ENCODE measurements at regions of chr17 and their contacts with region 1.

Region 1: DNA sequence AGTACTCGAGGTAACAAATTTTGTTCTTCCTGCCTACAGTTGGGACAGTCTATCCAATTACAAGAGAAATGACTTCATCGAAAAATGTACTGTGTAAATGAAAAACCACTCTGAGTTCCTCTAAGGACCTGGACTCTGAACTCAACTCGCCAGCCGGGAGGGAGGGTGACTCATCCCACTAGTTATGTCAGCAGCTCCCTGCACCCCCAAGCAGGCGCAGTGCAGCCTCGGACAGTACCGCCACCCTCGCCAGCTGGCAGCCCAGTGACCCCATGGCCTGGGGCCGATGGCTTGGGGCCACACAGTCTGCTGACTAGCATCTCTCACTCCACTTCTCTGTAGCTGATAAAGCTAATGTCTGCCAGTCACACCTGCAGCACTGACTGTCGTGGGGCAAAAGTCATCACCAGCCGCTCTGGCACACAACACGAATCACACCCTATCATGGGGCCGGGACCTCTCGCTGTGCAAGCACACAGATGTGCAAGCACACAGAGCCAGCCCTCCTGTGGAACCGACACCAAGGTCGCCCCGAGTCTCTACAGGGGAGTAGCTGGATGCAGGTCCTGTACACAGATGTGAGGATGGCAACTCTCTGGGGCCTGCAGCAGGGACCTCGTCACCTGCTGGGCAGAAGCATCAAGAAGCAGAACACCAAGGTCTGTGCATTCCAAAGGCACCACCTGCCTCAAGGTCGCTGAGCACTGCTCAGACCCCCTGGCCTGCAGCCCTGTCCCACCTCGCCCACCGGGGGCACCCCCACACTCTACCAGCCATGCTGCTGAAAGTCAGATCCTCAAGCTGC is 5.7 kb downstream of the CSNK1D start:
- DNase-seq: peak; percentile 88 to 96 (median 95)
- ATAC-seq: peak; percentile 93 to 96 (median 95)
- H3K4me3 ChIP-seq: peak overlapping the region in 9 of 12 donors; percentile 6 to 42 (median 24)
- H3K27ac ChIP-seq: peak overlapping the region; percentile 64 to 91 (median 85)
- H3K4me1 ChIP-seq: peaks cover 12 to 74% (median 66%) of the 10 kb centered on the region in 12 donors
- H3K27me3 ChIP-seq: no peaks in the 10 kb centered on the region
- CTCF ChIP-seq: no peak
- POLR2A ChIP-seq: no peak

Region 2: DNA sequence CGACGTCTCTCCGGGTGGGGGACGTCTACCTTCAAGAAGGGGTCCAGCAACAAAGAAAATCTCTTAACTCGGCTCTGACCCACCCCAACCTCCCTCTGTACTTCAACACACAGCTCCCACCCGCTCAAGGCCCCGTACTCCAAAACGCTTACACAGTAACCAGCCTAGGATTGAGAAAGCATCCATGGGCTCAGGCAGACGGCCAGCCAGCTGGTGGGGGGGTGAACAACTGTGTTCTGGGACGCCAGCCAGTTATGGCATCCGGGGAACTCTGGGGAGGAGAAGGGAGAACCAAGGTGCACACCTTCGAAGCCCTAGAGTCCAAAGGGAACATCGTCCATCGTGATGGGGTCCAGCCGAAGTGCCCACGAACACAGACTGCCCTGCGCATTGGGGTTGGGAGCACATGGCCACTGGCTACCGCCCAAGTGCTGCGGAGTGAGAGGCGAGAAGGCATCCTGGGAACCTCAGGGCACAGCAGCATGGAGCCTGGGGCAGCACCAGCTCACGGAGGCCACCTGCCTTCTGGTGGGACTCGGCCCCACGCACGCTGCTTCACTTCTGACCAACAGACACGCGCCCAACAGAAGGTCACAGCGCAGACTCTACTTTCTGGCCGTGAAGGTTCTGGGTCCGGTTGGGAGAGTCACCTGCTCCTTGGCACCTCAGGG is 24.7 kb before region 1 on chr17:
- intact Hi-C with region 1: loop called in 3 of 10 experiments (anchors 2 to 5 kb)
- DNase-seq: peak; percentile 69 to 87 (median 85)
- ATAC-seq: peak in 3 of 4 donors; percentile 20 to 42 (median 26)
- H3K4me3 ChIP-seq: no peak overlapping the region
- H3K27ac ChIP-seq: peak overlapping the region in 10 of 12 donors; percentile 58 to 86 (median 75)
- H3K4me1 ChIP-seq: peaks cover 55 to 85% (median 80%) of the 10 kb centered on the region in 12 donors
- H3K27me3 ChIP-seq: no peaks in the 10 kb centered on the region
- CTCF ChIP-seq: no peak
- POLR2A ChIP-seq: no peak

Region 3: GRCh38 chr17:82257473-82257872 is 10.3 kb before region 1 on chr17:
- intact Hi-C with region 1: loop called in 1 of 10 experiments (anchors 2 kb)
- DNase-seq: no peak
- ATAC-seq: peak; percentile 69 to 84 (median 80)
- H3K4me3 ChIP-seq: no peak overlapping the region
- H3K27ac ChIP-seq: no peak overlapping the region
- H3K4me1 ChIP-seq: no peaks in the 10 kb centered on the region
- H3K27me3 ChIP-seq: no peaks in the 10 kb centered on the region
- CTCF ChIP-seq: no peak
- POLR2A ChIP-seq: no peak